ENCODE measurements at regions of chr18 and their contacts with region 1.

Region 1: GRCh38 chr18:63518178-63519012 is 23.8 kb upstream of the SERPINB12 start:
- DNase-seq: peak in 1 of 2 donors; percentile 65
- ATAC-seq: peak; percentile 61 to 85 (median 82)
- H3K4me3 ChIP-seq: no peak overlapping the region
- H3K27ac ChIP-seq: no peak overlapping the region
- H3K4me1 ChIP-seq: no peaks in the 10 kb centered on the region
- H3K27me3 ChIP-seq: peaks cover 0 to 23% (median 4%) of the 10 kb centered on the region in 7 donors
- CTCF ChIP-seq: peak; percentile 67 to 82 (median 77)

Region 2: GRCh38 chr18:63292831-63293683 is 225.3 kb before region 1 on chr18:
- intact Hi-C with region 1: no loop called
- DNase-seq: no peak
- ATAC-seq: peak in 1 of 8 donors; percentile 26
- H3K4me3 ChIP-seq: no peak overlapping the region
- H3K27ac ChIP-seq: peak overlapping the region in 5 of 10 donors; percentile 11 to 31 (median 19)
- H3K4me1 ChIP-seq: peaks cover 0 to 60% (median 41%) of the 10 kb centered on the region in 9 donors
- H3K27me3 ChIP-seq: no peaks in the 10 kb centered on the region
- CTCF ChIP-seq: no peak

Region 3: GRCh38 chr18:63562284-63562683 is 43.9 kb after region 1 on chr18:
- intact Hi-C with region 1: no loop called
- DNase-seq: no peak
- ATAC-seq: no peak
- H3K4me3 ChIP-seq: no peak overlapping the region
- H3K27ac ChIP-seq: no peak overlapping the region
- H3K4me1 ChIP-seq: no peaks in the 10 kb centered on the region
- H3K27me3 ChIP-seq: no peaks in the 10 kb centered on the region
- CTCF ChIP-seq: no peak

Region 4: GRCh38 chr18:63578357-63578958 is 60.1 kb after region 1 on chr18:
- intact Hi-C with region 1: loop called in 9 of 10 experiments (anchors 1 to 5 kb)
- DNase-seq: no peak
- ATAC-seq: no peak
- H3K4me3 ChIP-seq: no peak overlapping the region
- H3K27ac ChIP-seq: no peak overlapping the region
- H3K4me1 ChIP-seq: peaks cover 0 to 2% (median 0%) of the 10 kb centered on the region in 9 donors
- H3K27me3 ChIP-seq: peaks cover 0 to 6% (median 0%) of the 10 kb centered on the region in 7 donors
- CTCF ChIP-seq: peak; percentile 13 to 75 (median 63)

Region 5: GRCh38 chr18:63848159-63848558 is 329.8 kb after region 1 on chr18:
- intact Hi-C with region 1: loop called (anchors 2 to 10 kb)
- DNase-seq: no peak
- ATAC-seq: peak in 1 of 8 donors; percentile 31
- H3K4me3 ChIP-seq: no peak overlapping the region
- H3K27ac ChIP-seq: no peak overlapping the region
- H3K4me1 ChIP-seq: no peaks in the 10 kb centered on the region
- H3K27me3 ChIP-seq: peaks cover 0 to 11% (median 7%) of the 10 kb centered on the region in 7 donors
- CTCF ChIP-seq: peak in 7 of 9 donors; percentile 28 to 55 (median 38)

Region 6: DNA sequence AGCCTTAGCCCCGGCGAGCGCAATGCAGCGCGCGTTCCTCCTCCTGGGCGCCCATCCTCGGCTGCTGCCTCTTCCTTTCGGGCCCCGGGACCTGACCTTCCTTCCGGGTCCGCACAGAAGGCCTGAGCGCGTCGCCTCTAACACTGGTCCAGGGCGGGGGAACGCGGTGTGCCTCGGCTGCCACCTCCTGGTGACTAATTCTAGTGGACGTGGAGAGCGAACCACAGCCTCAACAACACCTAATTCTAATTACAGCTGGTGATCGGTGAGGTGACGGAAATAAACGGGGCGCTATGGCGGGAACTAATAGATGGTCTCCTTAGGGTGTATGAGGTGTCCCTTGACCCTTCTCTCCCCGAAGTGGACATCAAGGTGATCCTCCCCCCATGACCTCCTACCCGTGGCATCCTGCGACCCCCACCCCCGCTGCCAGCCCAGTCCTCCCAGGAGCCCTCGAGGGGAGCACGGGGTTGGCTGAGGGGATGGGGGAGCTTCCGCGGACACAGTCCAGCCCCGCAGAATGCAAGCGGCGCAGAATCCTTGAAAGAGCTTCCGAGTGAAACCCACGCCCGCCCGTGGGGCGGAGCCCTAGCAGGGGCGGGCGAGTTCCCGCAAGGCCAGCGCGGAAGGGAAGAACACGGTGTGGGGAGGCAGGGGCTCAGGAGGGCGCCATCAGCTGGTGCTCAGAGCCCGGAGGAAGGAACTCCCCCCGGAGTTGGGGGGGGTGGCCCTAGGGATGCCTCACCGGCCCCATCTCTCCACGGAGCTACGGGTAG is 417.9 kb after region 1 on chr18:
- intact Hi-C with region 1: loop called in 8 of 10 experiments (anchors 2 to 10 kb)
- DNase-seq: peak; percentile 76 to 79
- ATAC-seq: peak; percentile 90 to 100 (median 98)
- H3K4me3 ChIP-seq: peak overlapping the region; percentile 1 to 60 (median 52)
- H3K27ac ChIP-seq: peak overlapping the region in 1 of 10 donors; percentile 1
- H3K4me1 ChIP-seq: peaks cover 0 to 14% (median 9%) of the 10 kb centered on the region in 9 donors
- H3K27me3 ChIP-seq: peaks cover 0 to 49% (median 36%) of the 10 kb centered on the region in 7 donors
- CTCF ChIP-seq: peak; percentile 48 to 78 (median 72)

Region 7: GRCh38 chr18:63969960-63970802 is 451.8 kb after region 1 on chr18 and contains the start of gene SERPINB8:
- intact Hi-C with region 1: loop called in 2 of 10 experiments (anchors 5 to 10 kb)
- DNase-seq: peak; percentile 94
- ATAC-seq: peak; percentile 97 to 99 (median 99)
- H3K4me3 ChIP-seq: peak within 1 kb of the TSS; percentile 71 to 92 (median 86)
- H3K27ac ChIP-seq: peak within 1 kb of the TSS; percentile 87 to 97 (median 96)
- H3K4me1 ChIP-seq: peaks cover 0 to 32% (median 8%) of the 10 kb centered on the region in 9 donors
- H3K27me3 ChIP-seq: peaks cover 0 to under 1% (median 0%) of the 10 kb centered on the region in 7 donors
- CTCF ChIP-seq: no peak
- total RNA-seq, gene SERPINB8: 0.81 to 10.9 (median 2.5) TPM

Region 8: DNA sequence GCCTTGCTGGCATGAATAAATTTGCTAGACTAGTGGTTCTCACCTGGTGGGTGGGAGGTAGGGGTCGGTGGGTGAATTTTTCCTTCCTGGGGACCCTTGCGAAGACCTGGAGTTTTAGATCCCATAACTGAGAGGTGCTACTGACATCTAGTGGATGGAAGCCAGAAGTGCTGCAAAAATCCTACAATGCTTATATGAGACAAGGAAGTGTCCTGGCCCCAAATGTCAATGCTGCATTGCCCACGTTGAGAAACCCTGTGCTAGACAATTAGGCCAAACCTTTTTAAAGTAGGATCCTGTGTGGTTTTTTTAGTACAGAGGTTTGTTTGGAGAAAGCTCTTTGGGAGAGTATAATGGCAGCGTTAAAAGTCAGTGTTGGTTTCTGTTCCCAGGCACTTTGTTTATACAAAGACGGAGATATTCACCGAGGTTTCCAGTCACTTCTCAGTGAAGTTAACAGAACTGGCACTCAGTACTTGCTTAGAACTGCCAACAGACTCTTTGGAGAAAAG is 461.1 kb after region 1 on chr18:
- intact Hi-C with region 1: loop called in 2 of 10 experiments (anchors 5 to 10 kb)
- DNase-seq: peak in 1 of 2 donors; percentile 50
- ATAC-seq: peak in 7 of 8 donors; percentile 74 to 85 (median 82)
- H3K4me3 ChIP-seq: peak overlapping the region in 6 of 10 donors; percentile 16 to 42 (median 32)
- H3K27ac ChIP-seq: peak overlapping the region in 4 of 10 donors; percentile 25 to 56 (median 44)
- H3K4me1 ChIP-seq: peaks cover 0 to 51% (median 4%) of the 10 kb centered on the region in 9 donors
- H3K27me3 ChIP-seq: no peaks in the 10 kb centered on the region
- CTCF ChIP-seq: peak; percentile 59 to 92 (median 87)

Region 9: GRCh38 chr18:63994783-63995399 is 476.5 kb after region 1 on chr18:
- intact Hi-C with region 1: loop called in 2 of 10 experiments (anchors 5 kb)
- DNase-seq: peak in 1 of 2 donors; percentile 23
- ATAC-seq: peak in 4 of 8 donors; percentile 44 to 69 (median 52)
- H3K4me3 ChIP-seq: no peak overlapping the region
- H3K27ac ChIP-seq: no peak overlapping the region
- H3K4me1 ChIP-seq: no peaks in the 10 kb centered on the region
- H3K27me3 ChIP-seq: no peaks in the 10 kb centered on the region
- CTCF ChIP-seq: peak; percentile 74 to 89 (median 86)

Measured in heart right ventricle (tissue), 16 donors.